ENCODE measurements at regions of chr3 and their contacts with region 1.

Region 1: DNA sequence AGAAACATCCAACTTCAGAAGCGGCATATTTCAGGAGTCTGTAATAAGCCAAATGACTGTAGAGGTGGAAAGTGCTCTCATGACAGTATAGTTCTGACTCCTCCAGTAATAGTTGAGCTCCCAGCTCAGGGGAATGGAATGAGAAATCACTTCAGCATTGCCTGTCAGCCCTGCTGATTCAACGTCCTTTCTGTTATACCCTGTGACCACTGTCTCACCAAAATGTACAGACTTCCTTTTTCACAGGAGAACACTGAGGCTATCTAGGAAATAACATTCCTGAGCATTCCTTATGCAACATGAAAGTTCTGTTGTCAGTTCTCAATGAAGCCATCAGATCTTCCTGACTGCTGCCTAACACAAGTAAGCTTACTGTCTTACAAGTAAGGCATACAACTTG is 284.5 kb upstream of the MME start:
- DNase-seq: peak; percentile 78
- H3K4me3 ChIP-seq: no peak overlapping the region
- H3K27me3 ChIP-seq: no peaks in the 10 kb centered on the region
- CTCF ChIP-seq: no peak

Region 2: DNA sequence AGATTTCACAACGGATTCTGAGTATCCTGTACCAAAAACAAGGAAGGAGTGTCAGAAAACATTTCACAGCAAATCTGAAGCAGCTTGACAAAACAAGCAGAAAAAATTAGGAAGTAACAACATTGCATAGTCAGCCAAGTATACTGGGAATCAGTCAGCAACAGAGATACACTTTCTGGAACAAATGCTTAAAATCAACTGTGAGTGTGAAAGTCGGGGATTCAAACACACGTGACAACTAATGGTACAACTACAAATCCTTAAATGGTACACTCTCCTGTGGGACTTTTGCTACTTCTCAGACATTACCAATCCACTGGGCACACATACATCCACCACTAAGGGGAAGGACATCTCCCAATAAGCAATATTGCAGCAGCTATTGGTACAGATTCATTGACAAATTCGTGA is 12.1 kb before region 1 on chr3:
- CTCF ChIA-PET with region 1: interaction called, 4 read pairs
- POLR2A ChIA-PET with region 1: interaction called, 12 read pairs
- DNase-seq: no peak
- H3K4me3 ChIP-seq: no peak overlapping the region
- H3K27me3 ChIP-seq: no peaks in the 10 kb centered on the region
- CTCF ChIP-seq: no peak

Region 3: DNA sequence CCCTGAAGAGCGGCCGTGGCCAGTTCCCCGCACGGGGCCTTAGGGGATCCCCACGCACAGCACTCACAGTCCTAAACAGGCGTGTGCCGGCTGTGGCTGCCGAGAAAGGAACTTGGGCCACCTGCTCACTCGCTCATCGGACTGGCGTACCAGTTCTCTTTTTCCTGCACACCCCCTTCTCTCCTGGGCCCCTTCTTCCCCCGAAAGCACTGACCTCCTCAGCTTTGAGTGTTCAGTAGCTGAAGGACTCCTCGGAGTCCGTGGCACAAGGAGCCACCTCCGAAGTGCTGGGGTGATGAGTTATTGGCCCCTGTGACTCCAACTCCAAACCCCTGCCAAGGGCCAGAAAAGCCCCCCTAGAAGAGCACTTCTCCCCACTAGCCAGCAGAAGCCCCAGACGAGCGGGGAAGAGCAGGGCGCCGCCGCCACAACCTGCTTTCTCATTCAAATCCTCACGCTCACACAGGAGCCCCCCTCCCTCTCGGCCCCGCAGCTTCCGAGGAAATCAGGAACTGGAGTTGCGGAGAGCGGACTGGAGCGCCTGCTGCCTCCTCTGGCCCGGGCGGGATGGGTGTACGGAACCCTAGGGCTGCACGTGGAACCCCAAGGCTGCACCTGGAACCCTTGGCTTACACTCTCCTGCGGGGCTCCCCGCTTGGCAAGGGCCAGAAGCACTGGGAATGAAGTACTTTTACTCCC is 949.2 kb after region 1 on chr3 and contains the start of gene PLCH1:
- CTCF ChIA-PET with region 1: no interaction called
- POLR2A ChIA-PET with region 1: interaction called, 14 read pairs
- DNase-seq: no peak
- H3K4me3 ChIP-seq: peak within 1 kb of the TSS; percentile 59
- H3K27me3 ChIP-seq: peaks cover 5% of the 10 kb centered on the region
- CTCF ChIP-seq: no peak
- polyA plus RNA-seq, gene PLCH1: 0.06 and 0.07 TPM in 2 replicates

Measured in BJ (cell line).